Common myeloid progenitor, CD34-positive (primary cell): ENCODE measurements at regions of chr10 and their contacts with region 1.

Region 1: DNA sequence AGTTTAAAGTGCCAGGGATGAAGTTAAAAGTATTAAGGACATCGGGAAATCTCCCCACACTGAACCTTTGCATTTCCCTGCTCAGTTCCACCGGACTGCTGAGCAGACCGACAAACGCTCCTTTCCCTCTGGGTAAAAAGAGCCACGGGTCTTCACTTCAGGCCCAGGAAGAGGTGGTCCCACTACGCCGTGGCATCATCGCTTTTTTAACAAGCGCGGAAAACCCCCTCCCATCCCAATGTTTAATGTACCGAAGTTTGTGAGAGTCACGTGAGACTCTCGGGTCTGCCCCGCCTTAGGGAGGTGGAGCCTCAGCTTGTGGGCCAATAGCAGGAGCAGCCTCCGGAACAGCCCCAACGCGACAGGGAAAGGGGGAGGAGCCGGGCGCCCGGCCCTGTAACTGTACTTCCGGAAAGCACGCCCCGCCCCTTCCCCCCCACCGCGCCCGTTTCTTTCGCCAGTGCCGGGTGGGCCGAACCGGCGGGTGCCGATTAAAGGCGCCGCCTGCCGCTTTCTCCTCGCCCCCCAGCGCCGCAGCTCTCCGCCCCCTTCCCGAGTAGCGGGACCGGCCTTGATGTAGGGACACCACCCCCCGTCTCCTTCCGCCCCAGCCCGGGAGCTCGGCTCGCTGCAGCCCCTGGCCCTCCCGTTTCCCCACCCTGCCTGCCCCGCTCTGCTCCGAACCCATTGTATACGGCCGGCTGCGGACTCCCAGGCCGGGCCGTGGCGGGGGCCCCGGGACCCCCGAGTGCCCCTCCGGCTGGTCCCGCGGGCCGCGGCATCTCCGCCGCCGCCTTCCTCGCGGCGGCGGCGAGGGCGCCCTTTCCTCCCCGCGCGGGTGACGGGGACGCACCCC is 2.2 kb upstream of the TRIM8 start:
- DNase-seq: peak; percentile 97 to 99 (median 99)
- H3K4me3 ChIP-seq: peak overlapping the region; percentile 69 to 92 (median 82)
- H3K27ac ChIP-seq: peak overlapping the region; percentile 81 to 95
- H3K4me1 ChIP-seq: peaks cover 2 to 36% (median 31%) of the 10 kb centered on the region in 4 experiments
- H3K27me3 ChIP-seq: no peaks in the 10 kb centered on the region

Region 2: DNA sequence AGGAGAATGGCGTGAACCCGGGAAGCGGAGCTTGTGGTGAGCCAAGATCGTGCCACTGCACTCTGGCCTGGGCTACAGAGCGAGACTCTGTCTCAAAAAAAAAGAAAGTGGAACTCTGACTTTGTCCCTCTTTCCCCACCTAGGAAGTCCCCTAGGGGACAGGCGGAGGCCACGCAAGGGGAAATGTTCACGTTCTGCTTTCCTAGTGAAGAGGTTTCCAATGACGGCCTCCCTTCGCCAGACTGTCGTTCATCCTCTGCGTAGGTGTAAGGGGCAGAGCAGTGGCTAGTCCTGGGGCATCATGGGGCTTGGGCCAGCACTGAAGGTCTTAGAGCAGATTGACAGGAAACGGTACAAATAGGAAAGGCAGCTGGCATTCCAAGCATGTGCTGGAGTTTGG is 107.8 kb before region 1 on chr10:
- CTCF ChIA-PET with region 1: no interaction called
- POLR2A ChIA-PET with region 1: no interaction called
- DNase-seq: no peak
- H3K4me3 ChIP-seq: no peak overlapping the region
- H3K27ac ChIP-seq: no peak overlapping the region
- H3K4me1 ChIP-seq: peaks cover 0 to 5% (median 0%) of the 10 kb centered on the region in 4 experiments
- H3K27me3 ChIP-seq: no peaks in the 10 kb centered on the region

Region 3: GRCh38 chr10:102604379-102604960 is 37.6 kb before region 1 on chr10:
- CTCF ChIA-PET with region 1: interaction called, 6 read pairs
- POLR2A ChIA-PET with region 1: interaction called, 14 read pairs
- DNase-seq: peak; percentile 52 to 79 (median 73)
- H3K4me3 ChIP-seq: peak overlapping the region in 2 of 7 experiments; percentile 17 to 29
- H3K27ac ChIP-seq: peak overlapping the region; percentile 56 to 91
- H3K4me1 ChIP-seq: peaks cover 9 to 65% (median 56%) of the 10 kb centered on the region in 4 experiments
- H3K27me3 ChIP-seq: no peaks in the 10 kb centered on the region

Region 4: DNA sequence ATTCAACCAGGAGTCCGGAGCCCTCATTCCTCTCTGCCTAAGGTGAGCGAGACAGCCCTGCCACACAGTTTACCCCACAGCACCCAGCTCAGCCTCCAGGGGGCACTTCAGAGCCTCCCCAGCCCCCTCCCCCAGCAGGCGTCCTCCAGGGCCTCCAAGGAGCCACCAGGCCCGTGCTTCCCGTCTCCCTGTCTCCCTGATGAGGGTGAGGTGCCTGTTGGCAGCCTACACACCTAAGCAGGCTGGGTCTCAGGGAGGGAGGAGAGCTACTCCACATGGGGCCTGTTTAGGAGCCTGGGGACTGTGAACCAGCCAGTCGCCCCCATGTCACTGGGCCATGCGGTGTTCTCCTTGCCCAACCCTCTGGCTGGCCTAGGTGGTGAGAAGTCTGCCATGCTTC is 26.7 kb before region 1 on chr10:
- CTCF ChIA-PET with region 1: interaction called, 10 read pairs
- POLR2A ChIA-PET with region 1: interaction called, 5 read pairs
- DNase-seq: no peak
- H3K4me3 ChIP-seq: no peak overlapping the region
- H3K27ac ChIP-seq: no peak overlapping the region
- H3K4me1 ChIP-seq: peaks cover 2 to 73% (median 53%) of the 10 kb centered on the region in 4 experiments
- H3K27me3 ChIP-seq: no peaks in the 10 kb centered on the region

Region 5: DNA sequence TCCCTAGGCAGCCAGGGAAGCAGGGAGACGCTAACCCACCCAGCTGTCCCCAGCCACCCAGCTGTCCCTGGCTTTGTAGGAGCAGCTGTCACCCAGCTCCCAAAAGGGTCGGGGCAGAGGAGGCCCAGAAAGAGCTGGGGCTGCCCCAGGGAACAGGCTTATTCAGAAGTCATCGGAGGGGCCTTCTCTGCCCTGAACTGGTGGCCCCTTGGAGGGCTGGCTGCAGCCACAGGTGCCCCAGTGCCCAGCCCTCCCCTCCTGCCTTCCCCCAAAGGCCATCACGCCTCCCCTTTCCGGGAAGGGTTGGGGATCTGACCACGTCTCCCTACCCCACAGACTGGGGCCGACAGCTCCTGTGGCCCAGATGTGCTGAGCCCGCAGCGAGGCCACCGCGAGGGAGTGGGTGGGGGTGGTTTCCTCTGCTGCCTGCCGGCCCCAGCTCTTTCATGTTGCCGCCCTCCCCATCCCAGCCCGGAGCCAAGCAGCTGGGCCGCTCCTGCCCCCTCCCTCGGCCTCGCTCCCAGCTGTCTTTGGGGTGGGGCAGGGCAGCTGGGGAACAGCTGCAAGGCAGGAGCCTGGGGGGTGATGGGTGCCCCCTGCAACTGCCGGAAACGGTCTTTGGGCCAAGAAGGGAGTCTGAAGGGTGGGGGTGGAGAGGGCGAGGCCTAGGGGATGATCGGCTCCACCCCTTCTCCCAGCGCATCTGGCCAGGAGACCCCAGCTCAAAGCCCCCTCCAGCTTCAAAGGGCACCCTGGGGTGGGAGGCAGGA is 19.0 kb after region 1 on chr10:
- CTCF ChIA-PET with region 1: interaction called, 18 read pairs
- POLR2A ChIA-PET with region 1: interaction called, 24 read pairs
- DNase-seq: peak; percentile 61 to 88 (median 85)
- H3K4me3 ChIP-seq: peak overlapping the region in 4 of 7 experiments; percentile 25 to 55 (median 39)
- H3K27ac ChIP-seq: no peak overlapping the region
- H3K4me1 ChIP-seq: peaks cover 2 to 35% (median 28%) of the 10 kb centered on the region in 4 experiments
- H3K27me3 ChIP-seq: no peaks in the 10 kb centered on the region

Region 6: DNA sequence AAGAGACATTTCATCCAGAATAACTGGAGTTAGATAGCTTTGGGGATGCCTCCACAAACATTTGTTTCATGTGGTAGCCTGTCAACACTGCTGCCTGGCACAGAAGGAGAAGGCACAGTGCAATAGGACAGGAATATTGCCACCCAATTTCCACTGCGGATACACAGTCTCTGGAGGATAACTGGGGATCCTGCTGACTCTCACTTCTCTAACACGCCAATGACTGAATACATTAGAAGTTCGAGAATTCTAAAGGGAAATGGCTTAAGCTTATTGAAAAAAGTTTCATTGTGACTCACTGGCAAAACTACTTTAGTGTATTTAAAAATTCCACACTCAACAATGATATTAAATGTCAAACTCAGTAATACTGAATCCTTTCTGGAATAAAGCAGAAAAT is 59.2 kb after region 1 on chr10:
- CTCF ChIA-PET with region 1: no interaction called
- POLR2A ChIA-PET with region 1: no interaction called
- DNase-seq: no peak
- H3K4me3 ChIP-seq: no peak overlapping the region
- H3K27ac ChIP-seq: no peak overlapping the region
- H3K4me1 ChIP-seq: no peaks in the 10 kb centered on the region
- H3K27me3 ChIP-seq: no peaks in the 10 kb centered on the region